Endothelial cell of umbilical vein (primary cell): ENCODE measurements at regions of chr16 and their contacts with region 1.

Region 1: DNA sequence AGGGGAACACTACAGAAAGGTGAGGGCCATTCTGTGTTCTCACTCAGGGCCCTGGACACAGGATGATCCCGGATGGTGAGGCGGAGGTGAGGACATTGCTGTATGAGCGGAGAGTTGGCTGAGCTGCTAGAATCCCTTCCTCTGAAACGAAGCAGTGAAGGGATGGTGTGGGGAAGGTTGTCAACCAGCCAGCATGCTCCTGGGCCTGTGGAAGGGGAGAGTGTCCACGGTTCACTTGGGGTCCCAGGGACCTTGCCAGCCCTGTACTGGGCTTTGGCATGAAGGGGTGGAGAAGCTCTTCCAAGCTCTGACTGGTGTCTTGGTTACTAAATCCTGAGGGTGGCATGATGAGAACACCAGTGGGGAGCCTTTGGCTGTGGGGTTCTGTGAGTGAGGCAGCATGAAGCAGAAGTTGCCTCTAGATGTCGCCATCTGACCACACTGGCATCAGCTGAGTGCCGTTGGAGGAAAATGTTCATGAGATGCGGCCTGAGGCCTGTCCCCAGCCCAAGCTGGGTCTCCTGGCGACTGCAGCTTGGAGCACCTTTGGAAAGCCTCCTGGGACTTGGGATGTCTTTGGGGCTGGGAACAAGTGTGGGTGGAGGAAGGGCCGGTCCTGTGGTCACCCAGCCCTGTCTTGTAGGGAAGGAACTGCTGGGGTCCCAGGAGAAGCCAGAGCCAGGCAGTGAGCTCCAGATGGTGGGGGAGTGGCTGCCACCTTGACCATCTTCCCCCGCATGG is 14.8 kb downstream of the PDP2 start:
- DNase-seq: peak; percentile 64
- H3K4me3 ChIP-seq: no peak overlapping the region
- H3K27ac ChIP-seq: no peak overlapping the region
- H3K4me1 ChIP-seq: peaks cover 5% of the 10 kb centered on the region
- H3K27me3 ChIP-seq: no peaks in the 10 kb centered on the region
- CTCF ChIP-seq: peak; percentile 74 to 89
- POLR2A ChIP-seq: no peak

Region 2: DNA sequence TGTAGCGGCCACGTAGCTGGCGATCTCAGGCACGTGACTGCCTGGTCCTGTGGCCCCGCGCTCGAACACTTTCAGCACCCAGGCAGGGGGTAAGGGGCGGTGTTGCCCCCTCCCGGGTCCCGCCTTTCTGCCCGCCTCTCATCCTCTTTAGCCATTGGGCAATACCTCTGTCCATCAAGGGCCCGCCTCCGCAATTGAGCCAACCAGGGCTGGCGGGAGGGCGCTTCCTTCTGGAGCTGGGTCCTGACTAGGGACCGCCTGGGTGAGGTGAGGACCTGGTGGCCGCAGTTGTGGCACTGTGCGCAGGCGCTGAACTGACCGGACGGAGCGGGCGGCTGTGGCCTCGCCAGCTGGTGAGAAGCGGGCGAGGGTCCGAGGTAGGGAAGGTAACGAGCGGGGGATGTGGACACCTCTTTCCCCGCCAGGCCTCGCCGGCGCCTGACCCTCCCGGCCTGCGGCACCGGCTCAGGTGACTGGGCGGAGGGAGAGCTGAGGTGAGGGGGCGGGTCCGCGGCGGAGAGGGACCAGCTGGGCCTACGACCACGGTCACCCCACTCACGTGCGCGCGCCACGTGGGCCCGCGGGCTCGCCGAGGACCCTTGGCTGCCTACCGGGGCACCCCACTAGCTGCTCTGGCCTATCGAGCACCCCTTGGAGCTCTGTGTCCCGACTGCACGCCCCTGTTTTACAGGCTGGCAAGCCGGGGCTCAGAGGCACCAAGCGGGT is 14.7 kb before region 1 on chr16 and contains the start of gene PDP2:
- CTCF ChIA-PET with region 1: interaction called, 18 read pairs
- POLR2A ChIA-PET with region 1: no interaction called
- dilution Hi-C with region 1: no loop called
- intact Hi-C with region 1: no loop called
- DNase-seq: peak; percentile 93
- H3K4me3 ChIP-seq: peak within 1 kb of the TSS; percentile 9 to 83 (median 57)
- H3K27ac ChIP-seq: no peak within 1 kb of the TSS
- H3K4me1 ChIP-seq: peaks cover 7% of the 10 kb centered on the region
- H3K27me3 ChIP-seq: no peaks in the 10 kb centered on the region
- CTCF ChIP-seq: no peak
- POLR2A ChIP-seq: no peak
- total RNA-seq, gene PDP2: 9.3 and 9.5 TPM in 2 replicates

Region 3: DNA sequence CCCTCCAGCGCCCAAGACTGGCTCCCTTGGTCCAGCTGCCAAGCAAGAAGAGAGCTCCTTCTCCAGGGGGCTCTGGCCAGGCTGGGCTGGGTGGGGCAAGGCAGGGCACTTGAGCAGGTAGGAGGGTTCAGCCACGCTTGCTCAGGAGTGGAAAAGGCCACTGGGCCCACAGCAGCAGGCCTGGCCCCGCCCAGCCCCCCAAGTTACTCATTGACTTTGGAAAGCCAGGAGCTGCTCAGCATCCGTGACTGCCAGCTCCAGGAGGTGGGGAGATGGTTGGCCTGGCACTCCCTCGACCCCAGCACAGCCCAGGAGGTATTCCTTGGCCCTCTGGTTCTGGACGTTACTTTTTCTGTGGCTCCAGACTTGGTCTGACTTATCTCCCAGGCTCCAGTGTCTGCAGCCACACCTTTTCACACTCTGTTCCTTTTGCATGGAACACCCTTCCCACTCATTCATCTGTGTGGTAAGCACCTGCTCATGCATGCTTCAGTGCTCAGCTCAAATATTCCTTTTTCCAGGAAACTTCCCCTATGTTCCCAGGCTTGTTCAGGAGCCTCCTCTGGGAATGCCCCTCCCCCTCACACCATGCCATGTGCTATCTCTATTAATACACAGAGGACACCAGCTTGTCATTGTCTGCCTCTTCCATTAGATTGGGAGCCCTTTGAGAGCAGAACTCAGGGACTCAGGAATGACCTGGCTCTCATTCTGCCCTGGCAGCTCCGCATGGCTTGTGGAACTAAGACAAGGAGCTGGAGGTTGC is 23.9 kb after region 1 on chr16 and contains the start of gene CDH16:
- CTCF ChIA-PET with region 1: interaction called, 25 read pairs
- POLR2A ChIA-PET with region 1: no interaction called
- dilution Hi-C with region 1: no loop called
- intact Hi-C with region 1: loop called (anchors 1 kb)
- DNase-seq: no peak
- H3K4me3 ChIP-seq: no peak within 1 kb of the TSS
- H3K27ac ChIP-seq: no peak within 1 kb of the TSS
- H3K4me1 ChIP-seq: no peaks in the 10 kb centered on the region
- H3K27me3 ChIP-seq: peaks cover 20 to 27% of the 10 kb centered on the region in 2 experiments
- CTCF ChIP-seq: no peak
- POLR2A ChIP-seq: no peak
- total RNA-seq, gene CDH16: not detected in 2 replicates

Region 4: GRCh38 chr16:66934153-66934838 is 39.2 kb after region 1 on chr16 and contains the start of gene CIAO2B:
- CTCF ChIA-PET with region 1: interaction called, 72 read pairs
- POLR2A ChIA-PET with region 1: no interaction called
- dilution Hi-C with region 1: no loop called
- intact Hi-C with region 1: no loop called
- DNase-seq: peak; percentile 87
- H3K4me3 ChIP-seq: peak within 1 kb of the TSS; percentile 22 to 88 (median 83)
- H3K27ac ChIP-seq: peak within 1 kb of the TSS; percentile 67
- H3K4me1 ChIP-seq: peaks cover 7% of the 10 kb centered on the region
- H3K27me3 ChIP-seq: no peaks in the 10 kb centered on the region
- CTCF ChIP-seq: no peak
- POLR2A ChIP-seq: peak; percentile 84
- total RNA-seq, gene CIAO2B: 78.7 and 85.2 TPM in 2 replicates

Region 5: DNA sequence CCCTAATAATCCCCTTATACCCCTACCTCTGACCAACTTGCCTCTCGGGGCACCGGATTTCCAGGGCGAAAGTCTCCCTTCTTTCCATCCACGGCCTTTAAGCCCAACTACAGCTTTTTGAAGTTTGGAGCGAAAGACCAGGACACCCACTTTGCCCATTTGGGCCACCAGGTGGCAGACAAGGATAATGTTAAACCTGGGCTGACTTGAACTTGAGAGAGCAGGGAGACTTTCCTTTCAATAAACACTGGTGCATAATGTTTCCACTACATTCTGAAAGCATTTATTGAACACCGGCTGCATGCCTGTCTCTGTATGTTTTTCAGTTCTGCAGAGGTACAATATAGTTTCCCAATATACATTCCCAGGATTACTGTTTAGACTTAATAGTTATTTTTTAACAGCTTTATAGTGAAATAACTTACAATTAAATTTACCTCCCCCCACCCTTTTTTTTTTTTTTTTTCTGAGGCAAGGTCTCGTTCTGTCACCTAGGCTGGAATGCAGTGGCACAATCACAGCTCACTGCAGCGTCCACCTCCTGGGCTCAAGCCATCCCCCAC is 59.1 kb after region 1 on chr16:
- CTCF ChIA-PET with region 1: interaction called, 22 read pairs
- POLR2A ChIA-PET with region 1: no interaction called
- dilution Hi-C with region 1: no loop called
- intact Hi-C with region 1: no loop called
- DNase-seq: peak; percentile 78
- H3K4me3 ChIP-seq: no peak overlapping the region
- H3K27ac ChIP-seq: no peak overlapping the region
- H3K4me1 ChIP-seq: no peaks in the 10 kb centered on the region
- H3K27me3 ChIP-seq: peaks cover 3 to 5% of the 10 kb centered on the region in 2 experiments
- CTCF ChIP-seq: peak; percentile 78 to 85
- POLR2A ChIP-seq: no peak

Region 6: DNA sequence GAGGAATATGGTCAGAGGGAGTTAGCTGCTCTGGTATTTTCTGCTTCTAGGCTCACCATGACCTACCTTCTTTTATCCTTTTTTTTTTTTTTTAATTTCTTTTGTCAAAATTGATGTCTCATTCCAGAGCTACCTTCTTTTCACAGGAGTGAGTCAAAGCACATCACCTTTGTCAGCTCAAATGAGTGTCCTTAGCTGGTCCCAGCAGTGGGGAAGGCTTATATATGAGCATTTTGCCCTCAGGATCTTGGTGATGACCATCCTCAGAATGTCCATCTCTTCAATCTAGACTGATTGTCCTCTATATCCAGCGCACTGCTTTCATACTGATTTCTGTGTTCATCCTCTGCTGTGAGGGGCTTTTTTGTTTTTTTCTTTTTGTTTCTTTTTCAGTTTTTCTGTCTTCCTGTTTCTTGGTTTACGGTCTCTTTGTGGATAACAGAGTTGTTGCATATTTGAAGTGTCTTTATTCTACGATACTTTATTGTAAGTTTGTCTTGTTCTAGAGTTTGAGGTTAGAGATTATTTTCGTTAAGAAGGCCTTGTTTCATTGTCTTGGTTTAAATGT is 158.7 kb after region 1 on chr16:
- CTCF ChIA-PET with region 1: no interaction called
- POLR2A ChIA-PET with region 1: no interaction called
- dilution Hi-C with region 1: no loop called
- intact Hi-C with region 1: no loop called
- DNase-seq: no peak
- H3K4me3 ChIP-seq: no peak overlapping the region
- H3K27ac ChIP-seq: no peak overlapping the region
- H3K4me1 ChIP-seq: peaks cover 4% of the 10 kb centered on the region
- H3K27me3 ChIP-seq: no peaks in the 10 kb centered on the region
- CTCF ChIP-seq: no peak
- POLR2A ChIP-seq: no peak